Naive thymus-derived CD4-positive, alpha-beta T cell (primary cell): ENCODE measurements at regions of chr5 and their contacts with region 1.

Region 1: DNA sequence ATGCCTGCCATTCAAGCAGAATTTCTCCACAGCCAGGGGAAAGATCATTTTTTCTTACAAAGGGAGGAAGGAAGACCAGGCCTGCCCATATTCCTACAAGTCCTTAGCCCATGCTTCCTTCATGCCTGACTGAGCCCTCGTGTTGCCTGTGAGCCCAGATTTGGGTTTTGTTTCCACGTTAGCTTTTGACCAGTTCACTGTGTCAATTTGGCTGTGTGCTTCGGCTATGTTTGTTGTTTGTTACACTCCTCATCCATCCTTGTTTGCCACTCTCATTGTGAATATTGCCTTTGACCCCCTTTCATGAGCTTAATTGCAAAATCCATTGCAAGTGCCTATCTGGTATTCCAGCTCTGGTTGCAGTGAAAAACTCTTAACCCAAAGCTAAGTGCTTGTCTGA is 84.7 kb upstream of the RIOK2 start:
- DNase-seq: no peak
- ATAC-seq: no peak
- H3K4me3 ChIP-seq: no peak overlapping the region
- H3K4me3 Mint-ChIP-seq: no peak overlapping the region
- H3K27ac ChIP-seq: no peak overlapping the region
- H3K27ac Mint-ChIP-seq: no peak overlapping the region
- H3K4me1 ChIP-seq: no peaks in the 10 kb centered on the region
- H3K4me1 Mint-ChIP-seq: no peaks in the 10 kb centered on the region
- H3K27me3 ChIP-seq: no peaks in the 10 kb centered on the region
- H3K27me3 Mint-ChIP-seq: peaks cover 0 to 9% (median 6%) of the 10 kb centered on the region in 5 donors

Region 2: DNA sequence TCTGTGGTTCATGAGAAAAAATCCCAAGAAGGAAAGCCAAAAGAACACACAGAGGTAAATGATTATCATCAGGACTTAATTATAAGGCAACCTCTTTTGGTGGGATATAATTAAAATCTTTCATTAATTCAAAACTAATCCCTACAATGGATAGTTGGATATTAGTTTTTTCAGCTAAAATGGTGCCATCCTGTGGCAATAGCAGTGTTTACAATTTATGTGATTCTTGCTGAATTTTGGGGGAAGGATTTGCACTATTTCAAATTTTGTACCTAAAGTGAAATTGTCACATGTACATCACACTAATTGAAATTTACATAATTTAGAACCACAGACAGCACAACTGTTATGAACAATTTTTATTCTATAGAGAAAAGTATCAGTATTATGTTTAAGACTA is 538.6 kb before region 1 on chr5:
- CTCF ChIA-PET with region 1: no interaction called
- POLR2A ChIA-PET with region 1: no interaction called
- intact Hi-C with region 1: no loop called
- DNase-seq: no peak
- ATAC-seq: no peak
- H3K4me3 ChIP-seq: no peak overlapping the region
- H3K4me3 Mint-ChIP-seq: peak overlapping the region in 1 of 10 donors; percentile 15
- H3K27ac ChIP-seq: no peak overlapping the region
- H3K27ac Mint-ChIP-seq: peak overlapping the region in 2 of 9 donors; percentile 18 to 30
- H3K4me1 ChIP-seq: no peaks in the 10 kb centered on the region
- H3K4me1 Mint-ChIP-seq: peaks cover 5 to 39% (median 9%) of the 10 kb centered on the region in 7 donors
- H3K27me3 ChIP-seq: no peaks in the 10 kb centered on the region
- H3K27me3 Mint-ChIP-seq: no peaks in the 10 kb centered on the region

Region 3: DNA sequence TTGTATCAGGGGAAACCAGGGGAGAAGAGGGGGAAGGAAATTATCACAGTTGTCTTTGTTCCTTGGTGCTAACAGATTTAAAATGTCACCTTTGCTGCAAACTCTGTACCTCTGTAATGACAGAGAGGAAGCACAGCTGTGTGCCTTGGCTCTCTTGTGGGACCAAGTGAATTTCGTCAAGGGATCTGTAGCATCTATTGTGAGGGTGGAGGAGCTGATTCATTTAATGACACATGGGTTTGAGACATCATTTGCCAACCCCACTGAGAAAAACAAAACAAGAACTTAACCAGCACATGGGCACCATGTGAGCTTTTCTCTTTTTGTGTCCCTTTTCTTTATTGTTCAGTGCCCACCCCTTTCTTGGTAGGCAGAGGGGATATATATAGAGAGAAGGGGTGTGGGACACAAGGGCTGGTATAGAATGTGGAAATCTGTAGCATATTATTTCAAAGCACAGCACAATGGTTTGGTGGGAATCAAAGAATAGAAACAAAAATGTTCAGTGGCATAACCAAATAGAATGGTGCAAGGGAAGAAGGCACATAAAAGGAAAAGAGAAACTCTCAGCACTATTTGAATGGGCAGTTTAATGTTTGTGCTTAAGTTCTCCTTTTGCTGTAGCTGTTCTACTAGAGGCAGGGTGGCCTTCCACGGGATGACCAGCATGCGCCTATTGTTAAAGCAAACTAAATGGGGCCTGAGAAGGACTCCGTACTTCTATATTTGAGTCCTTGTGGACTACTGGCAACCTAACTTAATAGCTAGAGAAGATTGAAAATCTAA is 188.6 kb before region 1 on chr5:
- CTCF ChIA-PET with region 1: no interaction called
- POLR2A ChIA-PET with region 1: no interaction called
- intact Hi-C with region 1: no loop called
- DNase-seq: no peak
- ATAC-seq: peak; percentile 66
- H3K4me3 ChIP-seq: no peak overlapping the region
- H3K4me3 Mint-ChIP-seq: no peak overlapping the region
- H3K27ac ChIP-seq: no peak overlapping the region
- H3K27ac Mint-ChIP-seq: peak overlapping the region in 1 of 9 donors; percentile 18
- H3K4me1 ChIP-seq: no peaks in the 10 kb centered on the region
- H3K4me1 Mint-ChIP-seq: peaks cover 7 to 19% (median 13%) of the 10 kb centered on the region in 7 donors
- H3K27me3 ChIP-seq: no peaks in the 10 kb centered on the region
- H3K27me3 Mint-ChIP-seq: peaks cover 0 to 33% (median 0%) of the 10 kb centered on the region in 5 donors

Region 4: GRCh38 chr5:97281257-97281656 is 13.5 kb after region 1 on chr5:
- CTCF ChIA-PET with region 1: no interaction called
- POLR2A ChIA-PET with region 1: no interaction called
- intact Hi-C with region 1: loop called in 1 of 2 experiments (anchors 1 kb)
- DNase-seq: no peak
- ATAC-seq: no peak
- H3K4me3 ChIP-seq: no peak overlapping the region
- H3K4me3 Mint-ChIP-seq: no peak overlapping the region
- H3K27ac ChIP-seq: no peak overlapping the region
- H3K27ac Mint-ChIP-seq: no peak overlapping the region
- H3K4me1 ChIP-seq: no peaks in the 10 kb centered on the region
- H3K4me1 Mint-ChIP-seq: peaks cover 0 to 2% (median 0%) of the 10 kb centered on the region in 7 donors
- H3K27me3 ChIP-seq: no peaks in the 10 kb centered on the region
- H3K27me3 Mint-ChIP-seq: peaks cover 0 to 16% (median 5%) of the 10 kb centered on the region in 5 donors